Calu3 (cell line): ENCODE measurements at regions of chr6 and their contacts with region 1.

Region 1: GRCh38 chr6:24064082-24064481 is 61.9 kb upstream of the NRSN1 start:
- DNase-seq: peak; percentile 62
- H3K4me3 Mint-ChIP-seq: no peak overlapping the region
- H3K27ac Mint-ChIP-seq: no peak overlapping the region
- H3K4me1 Mint-ChIP-seq: no peaks in the 10 kb centered on the region
- H3K27me3 Mint-ChIP-seq: no peaks in the 10 kb centered on the region
- CTCF ChIP-seq: peak; percentile 53

Region 2: DNA sequence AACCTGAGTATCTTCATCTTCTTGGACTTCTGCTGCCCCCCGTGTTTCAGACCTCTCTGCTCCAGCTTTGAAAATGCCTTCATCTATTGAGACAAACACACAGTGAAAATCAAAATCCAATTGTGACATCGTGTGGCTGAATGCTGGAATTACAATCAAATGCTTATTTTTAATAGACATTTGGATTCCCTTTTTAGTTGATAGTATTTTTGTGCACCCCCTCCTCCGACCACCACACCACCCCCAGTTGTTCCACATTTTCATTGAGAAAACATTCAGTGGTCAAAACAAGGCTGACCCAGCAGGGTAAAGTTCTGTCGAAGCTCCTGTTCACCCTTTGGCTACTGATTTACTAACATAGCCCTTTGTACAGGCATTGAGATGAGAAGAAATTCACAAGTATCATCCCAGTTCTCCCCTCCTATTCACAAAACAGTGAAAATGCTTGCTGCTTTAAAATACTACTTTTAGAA is 141.0 kb after region 1 on chr6:
- CTCF ChIA-PET with region 1: interaction called, 15 read pairs
- intact Hi-C with region 1: loop called (anchors 1 kb)
- DNase-seq: peak; percentile 50
- H3K4me3 Mint-ChIP-seq: no peak overlapping the region
- H3K27ac Mint-ChIP-seq: no peak overlapping the region
- H3K4me1 Mint-ChIP-seq: peaks cover 31% of the 10 kb centered on the region
- H3K27me3 Mint-ChIP-seq: no peaks in the 10 kb centered on the region
- CTCF ChIP-seq: peak; percentile 79

Region 3: GRCh38 chr6:24274441-24275083 is 210.5 kb after region 1 on chr6:
- CTCF ChIA-PET with region 1: interaction called, 4 read pairs
- intact Hi-C with region 1: loop called (anchors 1 kb)
- DNase-seq: no peak
- H3K4me3 Mint-ChIP-seq: no peak overlapping the region
- H3K27ac Mint-ChIP-seq: no peak overlapping the region
- H3K4me1 Mint-ChIP-seq: peaks cover 40% of the 10 kb centered on the region
- H3K27me3 Mint-ChIP-seq: no peaks in the 10 kb centered on the region
- CTCF ChIP-seq: peak; percentile 68

Region 4: DNA sequence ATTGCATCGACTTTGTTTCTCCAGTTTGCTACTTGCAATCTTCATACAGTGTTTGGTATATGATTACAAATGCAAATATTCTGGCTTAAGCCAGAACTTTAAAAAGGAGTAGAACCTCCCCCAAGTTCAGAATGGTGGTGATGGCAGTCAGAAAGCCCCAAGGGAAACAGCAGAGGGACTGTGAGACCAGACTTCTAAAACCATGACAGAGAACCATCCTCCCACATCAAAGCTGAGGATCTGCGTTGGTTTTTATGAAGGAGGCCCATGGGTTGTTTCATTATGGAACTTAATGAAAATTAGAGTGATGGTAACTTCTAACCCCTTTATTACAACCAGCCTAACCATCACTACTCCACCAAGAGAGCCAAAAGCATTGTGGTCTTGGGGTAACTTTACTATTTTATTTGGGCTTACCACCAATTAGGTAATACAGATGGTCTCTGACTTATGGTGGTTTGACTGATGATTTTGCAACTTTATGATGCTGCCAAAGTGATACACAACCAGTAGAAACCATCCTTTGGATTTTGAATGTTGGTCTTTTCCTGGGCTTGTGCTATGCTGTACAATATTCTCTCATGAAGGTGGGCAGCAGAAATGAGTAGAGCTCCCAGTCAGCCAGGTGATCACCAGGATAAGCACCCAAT is 327.8 kb after region 1 on chr6:
- CTCF ChIA-PET with region 1: interaction called, 10 read pairs
- intact Hi-C with region 1: loop called (anchors 1 kb)
- DNase-seq: no peak
- H3K4me3 Mint-ChIP-seq: no peak overlapping the region
- H3K27ac Mint-ChIP-seq: no peak overlapping the region
- H3K4me1 Mint-ChIP-seq: peaks cover 16% of the 10 kb centered on the region
- H3K27me3 Mint-ChIP-seq: no peaks in the 10 kb centered on the region
- CTCF ChIP-seq: no peak